ENCODE measurements at regions of chr6 and their contacts with region 1.

Region 1: GRCh38 chr6:112043032-112044007 is 10.6 kb upstream of the CCN6 start:
- DNase-seq: peak; percentile 91
- ATAC-seq: peak; percentile 93
- H3K4me3 ChIP-seq: peak overlapping the region; percentile 69 to 99 (median 71)
- H3K4me3 Mint-ChIP-seq: peak overlapping the region; percentile 99
- H3K27ac ChIP-seq: peak overlapping the region; percentile 93 to 94
- H3K27ac Mint-ChIP-seq: peak overlapping the region; percentile 99
- H3K4me1 ChIP-seq: peaks cover 0 to 3% of the 10 kb centered on the region in 2 donors
- H3K4me1 Mint-ChIP-seq: peaks cover 4% of the 10 kb centered on the region
- H3K27me3 ChIP-seq: no peaks in the 10 kb centered on the region
- H3K27me3 Mint-ChIP-seq: peaks cover 5% of the 10 kb centered on the region
- CTCF ChIP-seq: peak; percentile 89

Region 2: GRCh38 chr6:111011360-111012142 is 1031.8 kb before region 1 on chr6:
- CTCF ChIA-PET with region 1: interaction called, 10 read pairs
- POLR2A ChIA-PET with region 1: no interaction called
- intact Hi-C with region 1: loop called (anchors 2 kb)
- DNase-seq: peak; percentile 56
- ATAC-seq: peak; percentile 56
- H3K4me3 ChIP-seq: no peak overlapping the region
- H3K4me3 Mint-ChIP-seq: no peak overlapping the region
- H3K27ac ChIP-seq: peak overlapping the region in 1 of 2 donors; percentile 44
- H3K27ac Mint-ChIP-seq: no peak overlapping the region
- H3K4me1 ChIP-seq: peaks cover 0 to 2% of the 10 kb centered on the region in 2 donors
- H3K4me1 Mint-ChIP-seq: peaks cover 4% of the 10 kb centered on the region
- H3K27me3 ChIP-seq: no peaks in the 10 kb centered on the region
- H3K27me3 Mint-ChIP-seq: no peaks in the 10 kb centered on the region
- CTCF ChIP-seq: peak; percentile 75

Region 3: GRCh38 chr6:111483736-111484632 is 559.3 kb before region 1 on chr6:
- CTCF ChIA-PET with region 1: no interaction called
- POLR2A ChIA-PET with region 1: no interaction called
- intact Hi-C with region 1: loop called (anchors 1 kb)
- DNase-seq: no peak
- ATAC-seq: peak; percentile 68
- H3K4me3 ChIP-seq: peak overlapping the region; percentile 72 to 97 (median 88)
- H3K4me3 Mint-ChIP-seq: peak overlapping the region; percentile 96
- H3K27ac ChIP-seq: peak overlapping the region; percentile 98 to 99
- H3K27ac Mint-ChIP-seq: peak overlapping the region; percentile 99
- H3K4me1 ChIP-seq: peaks cover 16 to 18% of the 10 kb centered on the region in 2 donors
- H3K4me1 Mint-ChIP-seq: peaks cover 45% of the 10 kb centered on the region
- H3K27me3 ChIP-seq: no peaks in the 10 kb centered on the region
- H3K27me3 Mint-ChIP-seq: no peaks in the 10 kb centered on the region
- CTCF ChIP-seq: no peak

Region 4: DNA sequence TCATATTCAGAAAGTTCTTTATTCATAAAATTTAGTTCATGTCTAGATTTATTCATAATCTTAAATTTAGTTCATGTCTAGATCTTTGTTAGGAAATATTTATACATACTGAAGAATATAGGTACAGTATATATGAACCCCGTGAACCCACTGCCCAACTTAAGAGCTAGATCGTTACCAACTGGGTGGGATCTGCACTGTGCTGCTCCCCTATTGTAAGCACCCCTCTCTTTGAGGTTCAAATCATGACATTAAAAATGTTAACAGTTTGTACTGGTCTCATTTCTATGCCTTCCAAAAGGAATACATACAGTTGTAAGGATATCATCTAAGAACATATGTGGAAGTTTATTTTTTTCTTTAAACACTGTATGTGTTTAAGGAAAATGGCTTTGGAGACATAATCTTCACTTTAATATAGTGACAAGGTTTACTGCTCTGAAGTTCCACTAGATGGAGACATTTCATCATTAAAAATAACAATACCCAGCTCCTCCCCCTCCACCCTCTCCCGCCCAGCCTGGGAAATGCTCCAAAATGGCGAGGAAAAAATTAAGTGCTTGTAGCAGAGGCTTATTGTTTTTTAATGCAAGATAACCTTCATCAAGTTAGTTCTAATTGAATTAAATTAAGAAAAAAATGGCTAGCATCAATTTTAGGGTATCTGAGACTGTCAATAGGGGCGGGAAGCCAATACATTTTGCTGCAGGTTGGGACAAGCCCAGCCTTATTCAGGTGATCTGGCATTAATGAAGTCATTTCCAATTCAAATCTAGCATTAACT is 333.5 kb before region 1 on chr6:
- CTCF ChIA-PET with region 1: interaction called, 86 read pairs
- POLR2A ChIA-PET with region 1: no interaction called
- intact Hi-C with region 1: loop called (anchors 1 kb)
- DNase-seq: peak; percentile 77
- ATAC-seq: peak; percentile 96
- H3K4me3 ChIP-seq: no peak overlapping the region
- H3K4me3 Mint-ChIP-seq: peak overlapping the region; percentile 6
- H3K27ac ChIP-seq: no peak overlapping the region
- H3K27ac Mint-ChIP-seq: peak overlapping the region; percentile 32
- H3K4me1 ChIP-seq: peaks cover 3 to 5% of the 10 kb centered on the region in 2 donors
- H3K4me1 Mint-ChIP-seq: no peaks in the 10 kb centered on the region
- H3K27me3 ChIP-seq: no peaks in the 10 kb centered on the region
- H3K27me3 Mint-ChIP-seq: no peaks in the 10 kb centered on the region
- CTCF ChIP-seq: peak; percentile 87

Region 5: GRCh38 chr6:111873178-111874024 is 169.9 kb before region 1 on chr6 and contains the start of gene FYN:
- CTCF ChIA-PET with region 1: interaction called, 3 read pairs
- POLR2A ChIA-PET with region 1: no interaction called
- intact Hi-C with region 1: loop called (anchors 1 kb)
- DNase-seq: peak; percentile 98
- ATAC-seq: peak; percentile 94
- H3K4me3 ChIP-seq: peak within 1 kb of the TSS; percentile 61 to 89 (median 81)
- H3K4me3 Mint-ChIP-seq: peak within 1 kb of the TSS; percentile 99
- H3K27ac ChIP-seq: peak within 1 kb of the TSS; percentile 66 to 76
- H3K27ac Mint-ChIP-seq: peak within 1 kb of the TSS; percentile 94
- H3K4me1 ChIP-seq: peaks cover 26 to 36% of the 10 kb centered on the region in 2 donors
- H3K4me1 Mint-ChIP-seq: peaks cover 38% of the 10 kb centered on the region
- H3K27me3 ChIP-seq: no peaks in the 10 kb centered on the region
- H3K27me3 Mint-ChIP-seq: no peaks in the 10 kb centered on the region
- CTCF ChIP-seq: no peak
- total RNA-seq, gene FYN: 92.4 and 94.0 TPM in 2 replicates

Region 6: DNA sequence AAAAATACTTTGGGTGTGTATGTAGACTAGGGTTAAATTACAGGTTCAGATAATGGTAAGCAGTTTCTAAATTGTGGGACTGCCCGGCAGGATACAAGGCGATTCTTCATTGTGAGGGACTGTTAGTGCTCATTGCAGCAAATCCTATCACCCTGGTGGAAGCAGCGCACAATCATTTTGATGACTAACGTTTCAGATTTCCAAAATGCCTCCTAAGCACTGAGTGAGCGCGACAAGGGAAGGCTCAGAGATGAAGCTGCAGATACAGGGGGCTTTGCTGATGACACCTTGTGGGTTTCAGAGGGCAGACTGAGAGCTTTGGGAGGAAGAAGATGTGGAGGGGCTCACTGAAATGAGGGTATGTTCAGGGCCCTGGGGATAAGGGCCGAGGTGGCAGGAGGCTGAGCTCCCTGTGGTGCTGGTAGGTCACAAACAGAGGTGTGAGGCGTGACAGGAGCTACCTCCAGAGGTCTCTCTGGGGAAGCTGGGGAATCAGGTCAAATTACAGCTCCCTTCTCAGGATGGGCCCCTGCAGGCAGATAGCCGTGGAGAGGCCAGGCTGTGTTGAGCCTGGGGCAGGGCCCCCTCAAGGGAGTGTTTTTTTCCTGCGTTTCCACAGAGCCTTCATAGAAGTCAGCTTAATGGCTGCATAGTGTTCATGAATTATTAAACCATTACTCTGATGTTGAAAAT is 85.6 kb before region 1 on chr6:
- CTCF ChIA-PET with region 1: no interaction called
- POLR2A ChIA-PET with region 1: no interaction called
- intact Hi-C with region 1: no loop called
- DNase-seq: no peak
- ATAC-seq: no peak
- H3K4me3 ChIP-seq: no peak overlapping the region
- H3K4me3 Mint-ChIP-seq: no peak overlapping the region
- H3K27ac ChIP-seq: no peak overlapping the region
- H3K27ac Mint-ChIP-seq: no peak overlapping the region
- H3K4me1 ChIP-seq: no peaks in the 10 kb centered on the region
- H3K4me1 Mint-ChIP-seq: peaks cover 6% of the 10 kb centered on the region
- H3K27me3 ChIP-seq: peaks cover 0 to 1% (median 0%) of the 10 kb centered on the region in 4 experiments
- H3K27me3 Mint-ChIP-seq: peaks cover 7% of the 10 kb centered on the region
- CTCF ChIP-seq: no peak

Region 7: DNA sequence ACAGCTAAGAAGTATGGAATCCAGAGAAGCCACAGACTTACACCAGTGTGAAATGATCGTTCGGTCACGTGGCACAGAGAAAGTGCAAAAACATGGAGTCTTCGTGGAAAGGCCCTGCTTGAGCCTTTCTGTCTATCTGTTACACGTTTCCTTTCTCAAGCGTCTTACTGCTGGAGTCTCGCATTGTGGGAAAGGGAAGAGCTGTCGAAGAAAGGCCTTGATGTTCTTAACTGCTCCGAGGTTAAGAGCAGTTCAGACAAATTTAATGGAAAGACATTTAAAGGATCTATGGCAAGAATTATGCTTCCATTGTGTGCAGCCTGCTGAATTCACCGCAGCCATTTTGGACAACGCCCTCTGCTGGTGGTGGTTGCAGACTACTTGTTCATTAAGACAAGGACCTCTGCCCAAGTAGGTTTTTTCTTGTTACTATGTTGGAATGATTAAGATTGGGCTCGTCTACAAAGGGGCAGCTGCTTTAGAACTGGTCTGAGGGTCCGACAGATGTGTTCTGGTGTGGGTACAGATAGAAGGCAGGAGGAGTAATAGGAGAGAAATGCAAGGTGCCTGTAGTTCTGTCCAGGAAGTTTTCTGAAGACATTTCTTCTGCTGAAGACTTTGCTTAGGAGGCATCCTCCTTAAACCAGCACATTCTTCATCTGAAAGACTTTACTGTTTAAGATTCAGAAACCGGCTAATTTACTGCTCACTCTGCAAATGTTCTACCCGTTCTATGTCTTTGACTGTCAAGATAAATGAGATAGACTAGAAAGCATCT is 14.1 kb before region 1 on chr6:
- CTCF ChIA-PET with region 1: interaction called, 8 read pairs
- POLR2A ChIA-PET with region 1: no interaction called
- intact Hi-C with region 1: loop called (anchors 1 kb)
- DNase-seq: peak; percentile 71
- ATAC-seq: peak; percentile 39
- H3K4me3 ChIP-seq: no peak overlapping the region
- H3K4me3 Mint-ChIP-seq: no peak overlapping the region
- H3K27ac ChIP-seq: no peak overlapping the region
- H3K27ac Mint-ChIP-seq: no peak overlapping the region
- H3K4me1 ChIP-seq: peaks cover 10 to 13% of the 10 kb centered on the region in 2 donors
- H3K4me1 Mint-ChIP-seq: peaks cover 16% of the 10 kb centered on the region
- H3K27me3 ChIP-seq: no peaks in the 10 kb centered on the region
- H3K27me3 Mint-ChIP-seq: peaks cover 15% of the 10 kb centered on the region
- CTCF ChIP-seq: peak; percentile 79

Region 8: GRCh38 chr6:112163295-112164257 is 120.3 kb after region 1 on chr6:
- CTCF ChIA-PET with region 1: no interaction called
- POLR2A ChIA-PET with region 1: no interaction called
- intact Hi-C with region 1: loop called (anchors 1 kb)
- DNase-seq: peak; percentile 75
- ATAC-seq: peak; percentile 96
- H3K4me3 ChIP-seq: no peak overlapping the region
- H3K4me3 Mint-ChIP-seq: no peak overlapping the region
- H3K27ac ChIP-seq: no peak overlapping the region
- H3K27ac Mint-ChIP-seq: no peak overlapping the region
- H3K4me1 ChIP-seq: peaks cover 9% of the 10 kb centered on the region in 2 donors
- H3K4me1 Mint-ChIP-seq: peaks cover 12% of the 10 kb centered on the region
- H3K27me3 ChIP-seq: peaks cover 0 to 22% (median 13%) of the 10 kb centered on the region in 4 experiments
- H3K27me3 Mint-ChIP-seq: peaks cover 53% of the 10 kb centered on the region
- CTCF ChIP-seq: peak; percentile 99

Region 9: GRCh38 chr6:112725541-112726085 is 682.3 kb after region 1 on chr6:
- CTCF ChIA-PET with region 1: no interaction called
- POLR2A ChIA-PET with region 1: no interaction called
- intact Hi-C with region 1: no loop called
- DNase-seq: no peak
- ATAC-seq: no peak
- H3K4me3 ChIP-seq: no peak overlapping the region
- H3K4me3 Mint-ChIP-seq: no peak overlapping the region
- H3K27ac ChIP-seq: no peak overlapping the region
- H3K27ac Mint-ChIP-seq: no peak overlapping the region
- H3K4me1 ChIP-seq: no peaks in the 10 kb centered on the region
- H3K4me1 Mint-ChIP-seq: no peaks in the 10 kb centered on the region
- H3K27me3 ChIP-seq: no peaks in the 10 kb centered on the region
- H3K27me3 Mint-ChIP-seq: peaks cover 3% of the 10 kb centered on the region
- CTCF ChIP-seq: no peak

Measured in B cell (primary cell).